Spleen (tissue), 13 donors: ENCODE measurements at regions of chr14 and their contacts with region 1.

Region 1: DNA sequence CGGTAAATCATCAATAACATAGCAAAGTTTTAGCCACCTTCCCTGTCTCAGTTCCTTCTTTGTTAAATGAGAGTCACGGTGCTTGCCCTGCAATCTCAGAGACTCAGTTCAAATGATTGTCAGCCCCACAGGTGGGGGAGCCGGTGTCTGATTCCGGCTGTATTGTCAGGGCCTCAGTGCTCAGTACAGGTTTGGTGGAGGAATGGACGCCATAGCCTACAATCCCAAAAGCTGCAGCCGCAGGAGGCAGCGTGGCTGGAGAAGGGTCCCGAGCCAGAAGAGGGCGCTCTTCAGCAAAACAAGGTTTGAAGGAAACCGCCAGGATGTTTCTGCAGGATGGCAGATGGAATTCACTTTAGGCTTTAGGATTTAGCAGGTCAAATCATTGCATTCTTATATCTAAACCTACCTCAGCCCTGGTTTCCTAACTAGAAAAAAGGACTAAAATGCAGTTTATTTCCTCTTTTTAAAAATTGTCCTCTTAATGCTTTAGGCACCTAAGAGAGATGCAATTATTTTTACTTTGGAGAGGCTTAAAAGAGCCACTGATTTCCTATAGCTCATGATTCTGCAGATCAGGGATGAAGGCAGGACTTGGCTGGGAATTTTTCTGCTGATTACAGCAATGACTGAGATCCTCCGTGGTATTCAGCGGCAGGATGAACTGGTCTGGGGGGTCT is 29.2 kb downstream of the FOS start:
- DNase-seq: peak; percentile 90
- H3K4me3 ChIP-seq: no peak overlapping the region
- H3K27ac ChIP-seq: no peak overlapping the region
- H3K4me1 ChIP-seq: peaks cover 7 to 59% (median 29%) of the 10 kb centered on the region in 6 donors
- H3K27me3 ChIP-seq: no peaks in the 10 kb centered on the region
- CTCF ChIP-seq: peak; percentile 80 to 97 (median 91)
- POLR2A ChIP-seq: no peak

Region 2: DNA sequence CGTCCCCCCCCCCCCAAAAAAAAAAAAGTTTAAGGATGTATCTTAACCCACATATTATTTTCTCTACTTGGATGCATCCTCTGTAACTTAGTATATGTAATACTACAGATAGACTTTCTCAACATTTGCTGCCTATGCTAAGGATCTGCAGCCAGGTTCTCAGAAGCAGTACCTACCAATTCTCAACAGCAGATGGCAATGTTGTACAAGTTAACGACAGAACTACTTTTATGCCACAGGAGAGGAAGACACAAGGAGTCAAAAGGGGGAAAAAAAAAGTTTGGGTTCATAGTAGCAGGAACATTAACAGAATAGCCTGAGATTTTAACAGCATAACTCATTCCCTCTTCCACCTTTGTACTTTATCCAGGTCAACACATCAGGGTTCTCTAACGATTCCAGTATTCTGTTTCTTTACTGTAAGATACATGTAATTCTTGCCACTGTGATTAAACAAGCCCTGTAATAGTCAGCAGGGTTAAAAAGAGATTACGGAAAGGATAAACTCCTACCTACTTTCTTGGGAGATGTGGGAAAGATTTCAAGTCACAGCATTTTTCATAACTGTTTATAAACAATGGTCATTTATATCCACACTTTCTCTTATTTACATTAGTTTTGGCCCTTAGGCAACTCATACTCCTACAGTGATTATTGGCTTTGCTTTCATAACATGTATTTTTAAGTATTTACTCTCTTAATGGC is 175.3 kb before region 1 on chr14:
- intact Hi-C with region 1: loop called (anchors 5 kb)
- DNase-seq: no peak
- H3K4me3 ChIP-seq: no peak overlapping the region
- H3K27ac ChIP-seq: peak overlapping the region in 4 of 8 donors; percentile 41 to 56 (median 50)
- H3K4me1 ChIP-seq: peaks cover 3 to 48% (median 22%) of the 10 kb centered on the region in 6 donors
- H3K27me3 ChIP-seq: no peaks in the 10 kb centered on the region
- CTCF ChIP-seq: peak; percentile 69 to 94 (median 89)
- POLR2A ChIP-seq: no peak

Region 3: DNA sequence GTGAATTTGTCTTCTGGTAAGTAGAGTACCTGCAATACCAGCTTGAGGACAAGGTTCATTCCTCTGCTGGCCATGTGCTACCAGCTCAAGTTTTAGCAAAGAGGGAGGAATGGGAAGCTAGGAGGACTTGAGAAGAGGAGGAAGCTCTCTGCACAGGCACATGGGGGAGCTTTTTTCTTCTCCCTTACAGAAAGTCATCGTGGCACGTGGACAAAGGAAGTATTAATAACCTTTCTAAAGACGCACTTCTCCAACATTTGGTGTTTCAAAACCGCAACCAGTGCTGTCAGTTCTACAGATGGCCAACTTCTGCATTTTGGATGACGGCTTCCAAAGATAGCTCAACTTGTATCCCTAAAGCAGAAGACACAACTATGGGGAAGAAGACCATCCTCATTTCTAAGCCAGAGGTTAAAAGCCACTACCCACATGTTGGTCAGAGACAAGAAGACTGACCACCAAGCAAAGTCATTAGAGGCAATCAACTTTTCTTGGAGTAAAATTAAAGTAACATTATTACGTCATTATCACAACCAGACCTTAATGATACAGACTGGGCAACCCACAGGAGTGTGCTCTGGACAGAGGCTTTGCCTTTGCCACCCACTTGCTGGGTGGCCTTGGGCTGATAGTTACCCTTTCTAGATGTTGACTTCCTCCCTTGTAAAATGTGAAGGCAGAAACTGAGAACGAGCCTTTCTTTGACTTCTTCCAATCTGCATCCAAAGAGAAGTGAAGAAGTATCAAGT is 119.1 kb before region 1 on chr14:
- intact Hi-C with region 1: no loop called
- DNase-seq: no peak
- H3K4me3 ChIP-seq: peak overlapping the region in 1 of 8 donors; percentile 19
- H3K27ac ChIP-seq: peak overlapping the region in 7 of 8 donors; percentile 37 to 83 (median 63)
- H3K4me1 ChIP-seq: peaks cover 0 to 39% (median 18%) of the 10 kb centered on the region in 6 donors
- H3K27me3 ChIP-seq: no peaks in the 10 kb centered on the region
- CTCF ChIP-seq: peak in 2 of 11 experiments; percentile 16 to 17
- POLR2A ChIP-seq: no peak

Region 4: GRCh38 chr14:75389679-75390078 is 81.8 kb after region 1 on chr14:
- intact Hi-C with region 1: no loop called
- DNase-seq: no peak
- H3K4me3 ChIP-seq: no peak overlapping the region
- H3K27ac ChIP-seq: no peak overlapping the region
- H3K4me1 ChIP-seq: no peaks in the 10 kb centered on the region
- H3K27me3 ChIP-seq: peaks cover 0 to 5% (median 0%) of the 10 kb centered on the region in 7 donors
- CTCF ChIP-seq: no peak
- POLR2A ChIP-seq: no peak

Region 5: DNA sequence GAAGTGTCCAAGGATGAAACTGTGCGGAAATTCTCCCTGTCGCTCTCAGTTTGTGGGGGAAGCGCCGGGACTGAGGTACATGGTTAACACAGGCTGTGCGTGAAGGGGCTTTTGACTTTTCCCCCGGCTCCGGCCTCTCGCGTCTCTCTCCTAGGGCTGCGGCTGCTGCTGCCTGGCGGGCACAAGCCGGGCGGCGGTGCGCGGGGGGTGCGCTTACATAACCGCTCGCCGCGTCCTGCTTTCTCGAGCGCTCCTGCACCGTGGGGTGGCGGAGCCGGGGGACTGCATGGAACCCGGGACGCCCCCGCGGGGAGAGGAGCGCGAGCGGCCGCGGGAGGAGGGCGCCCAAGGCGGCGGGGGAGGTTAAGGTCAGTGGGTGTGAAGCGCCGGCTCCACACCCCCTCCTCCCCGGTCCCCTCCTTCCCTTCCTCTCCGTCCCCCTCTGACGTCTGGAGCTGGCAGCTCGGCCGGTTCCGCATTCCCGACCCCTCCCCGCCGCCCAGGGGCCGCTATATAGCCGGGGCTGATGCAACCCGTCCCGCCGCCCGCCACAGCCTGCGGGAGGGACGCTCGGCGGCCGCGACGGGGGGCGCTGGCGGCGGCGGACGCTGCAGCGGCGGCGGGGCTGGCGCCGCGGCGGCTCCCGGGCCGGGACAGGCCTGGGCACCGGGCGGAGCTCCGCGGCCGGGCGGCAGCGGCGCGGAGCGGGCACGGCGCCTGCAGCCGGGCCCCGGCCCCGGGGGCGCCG is 119.8 kb after region 1 on chr14 and contains the start of gene JDP2:
- intact Hi-C with region 1: loop called (anchors 10 kb)
- DNase-seq: peak; percentile 96
- H3K4me3 ChIP-seq: peak within 1 kb of the TSS; percentile 45 to 87 (median 63)
- H3K27ac ChIP-seq: peak within 1 kb of the TSS; percentile 84 to 94 (median 91)
- H3K4me1 ChIP-seq: peaks cover 14 to 63% (median 48%) of the 10 kb centered on the region in 6 donors
- H3K27me3 ChIP-seq: peaks cover 0 to 14% (median 0%) of the 10 kb centered on the region in 7 donors
- CTCF ChIP-seq: peak in 8 of 11 experiments; percentile 15 to 46 (median 29)
- POLR2A ChIP-seq: peak in 2 of 3 donors; percentile 62 to 67
- total RNA-seq, gene JDP2: 52.6 to 144 (median 123) TPM

Region 6: DNA sequence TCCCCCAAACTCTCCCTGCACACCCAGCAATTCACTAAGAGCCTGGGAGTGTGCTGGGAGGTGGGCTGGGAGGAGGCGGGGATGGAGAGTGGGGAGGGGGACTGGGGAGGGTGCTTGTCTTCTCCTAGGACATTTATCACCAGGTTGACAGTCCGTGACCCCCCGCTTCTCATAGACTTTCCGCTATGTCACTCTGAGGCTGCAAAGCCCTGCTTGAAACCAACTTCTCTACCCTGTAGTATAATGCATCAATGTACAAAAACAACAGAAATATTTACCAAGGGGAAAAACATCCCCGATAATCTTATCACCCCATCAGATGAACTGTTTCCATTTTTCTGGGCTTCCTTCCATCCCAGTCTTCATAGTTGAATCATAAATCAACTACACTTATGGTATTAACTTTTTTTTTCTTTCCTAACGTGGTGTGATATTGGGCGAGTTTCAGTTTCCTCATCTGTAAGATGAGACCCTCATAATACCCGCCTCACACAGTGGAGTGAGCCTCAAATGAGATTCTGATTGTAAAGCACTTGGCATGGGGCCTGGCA is 185.8 kb after region 1 on chr14:
- intact Hi-C with region 1: loop called (anchors 5 kb)
- DNase-seq: no peak
- H3K4me3 ChIP-seq: no peak overlapping the region
- H3K27ac ChIP-seq: no peak overlapping the region
- H3K4me1 ChIP-seq: peaks cover 0 to 31% (median 23%) of the 10 kb centered on the region in 6 donors
- H3K27me3 ChIP-seq: no peaks in the 10 kb centered on the region
- CTCF ChIP-seq: no peak
- POLR2A ChIP-seq: no peak

Region 7: GRCh38 chr14:75560962-75561432 is 253.2 kb after region 1 on chr14:
- intact Hi-C with region 1: loop called (anchors 10 kb)
- DNase-seq: peak; percentile 87
- H3K4me3 ChIP-seq: no peak overlapping the region
- H3K27ac ChIP-seq: no peak overlapping the region
- H3K4me1 ChIP-seq: peaks cover 8 to 24% (median 13%) of the 10 kb centered on the region in 6 donors
- H3K27me3 ChIP-seq: no peaks in the 10 kb centered on the region
- CTCF ChIP-seq: peak; percentile 63 to 90 (median 79)
- POLR2A ChIP-seq: no peak

Region 8: GRCh38 chr14:75654127-75654732 is 346.4 kb after region 1 on chr14:
- intact Hi-C with region 1: loop called (anchors 10 kb)
- DNase-seq: peak; percentile 91
- H3K4me3 ChIP-seq: no peak overlapping the region
- H3K27ac ChIP-seq: no peak overlapping the region
- H3K4me1 ChIP-seq: peaks cover 3 to 25% (median 6%) of the 10 kb centered on the region in 6 donors
- H3K27me3 ChIP-seq: no peaks in the 10 kb centered on the region
- CTCF ChIP-seq: peak; percentile 81 to 97 (median 93)
- POLR2A ChIP-seq: no peak